ENCODE measurements at regions of chr16 and their contacts with region 1.

Region 1: GRCh38 chr16:8936421-8936820 is 27.3 kb downstream of the USP7 start:
- DNase-seq: peak; percentile 83
- ATAC-seq: peak; percentile 99
- H3K4me3 Mint-ChIP-seq: no peak overlapping the region
- H3K27ac Mint-ChIP-seq: no peak overlapping the region
- H3K4me1 Mint-ChIP-seq: peaks cover 58% of the 10 kb centered on the region
- H3K27me3 Mint-ChIP-seq: no peaks in the 10 kb centered on the region

Region 2: GRCh38 chr16:8878521-8878911 is 57.9 kb before region 1 on chr16:
- CTCF ChIA-PET with region 1: interaction called, 16 read pairs
- POLR2A ChIA-PET with region 1: no interaction called
- DNase-seq: no peak
- ATAC-seq: no peak
- H3K4me3 Mint-ChIP-seq: no peak overlapping the region
- H3K27ac Mint-ChIP-seq: no peak overlapping the region
- H3K4me1 Mint-ChIP-seq: peaks cover 31% of the 10 kb centered on the region
- H3K27me3 Mint-ChIP-seq: no peaks in the 10 kb centered on the region

Region 3: DNA sequence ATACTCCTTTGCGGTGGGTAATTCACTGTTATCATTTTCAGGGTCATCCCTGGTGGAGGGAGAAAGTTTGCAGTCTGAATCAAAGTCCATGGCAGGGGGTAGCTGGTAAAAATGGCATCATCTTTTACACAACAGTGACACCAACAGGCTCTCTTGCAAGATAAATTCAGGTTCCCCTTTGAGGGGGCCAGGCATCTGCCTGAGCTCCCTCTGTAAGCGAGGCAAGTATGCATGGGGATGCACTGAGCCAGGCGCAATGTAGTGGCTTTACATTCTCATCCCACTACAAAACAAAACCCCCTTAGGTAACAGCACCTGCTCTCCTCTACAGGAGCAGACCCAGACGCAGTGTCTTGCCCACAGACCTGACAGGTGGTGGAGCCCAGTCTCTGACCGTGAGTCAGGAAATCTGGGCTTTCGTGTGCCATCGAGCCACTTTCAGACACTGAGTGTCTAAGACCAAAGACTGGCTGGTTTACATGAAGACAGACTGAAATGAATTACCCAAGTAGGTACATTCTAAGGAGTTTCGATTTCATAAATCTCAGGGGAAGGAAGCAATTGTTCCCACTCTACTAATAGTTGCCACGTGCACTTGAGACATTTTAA is 36.6 kb before region 1 on chr16:
- CTCF ChIA-PET with region 1: interaction called, 17 read pairs
- POLR2A ChIA-PET with region 1: no interaction called
- DNase-seq: no peak
- ATAC-seq: no peak
- H3K4me3 Mint-ChIP-seq: no peak overlapping the region
- H3K27ac Mint-ChIP-seq: no peak overlapping the region
- H3K4me1 Mint-ChIP-seq: no peaks in the 10 kb centered on the region
- H3K27me3 Mint-ChIP-seq: no peaks in the 10 kb centered on the region

Region 4: DNA sequence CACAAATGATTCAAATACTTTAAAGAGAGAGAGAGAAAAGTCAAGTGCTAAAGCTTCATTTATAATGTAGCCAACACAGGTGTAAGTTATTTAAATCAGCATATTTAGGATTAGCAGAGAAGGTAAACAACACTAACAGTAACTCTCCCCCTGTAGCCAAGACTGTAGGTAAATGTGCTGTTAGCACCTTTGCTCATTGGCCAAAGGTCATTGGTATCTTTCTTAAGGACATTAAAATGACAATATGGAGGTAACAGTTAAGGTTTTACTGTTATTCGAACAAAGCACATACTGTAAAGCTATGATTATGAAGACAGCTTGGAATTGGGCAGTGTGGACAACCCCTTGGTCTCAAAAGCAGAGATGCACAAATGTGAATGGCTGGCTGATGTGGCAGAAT is 25.6 kb before region 1 on chr16:
- CTCF ChIA-PET with region 1: interaction called, 30 read pairs
- POLR2A ChIA-PET with region 1: no interaction called
- DNase-seq: no peak
- ATAC-seq: no peak
- H3K4me3 Mint-ChIP-seq: no peak overlapping the region
- H3K27ac Mint-ChIP-seq: peak overlapping the region; percentile 52
- H3K4me1 Mint-ChIP-seq: peaks cover 52% of the 10 kb centered on the region
- H3K27me3 Mint-ChIP-seq: no peaks in the 10 kb centered on the region

Region 5: GRCh38 chr16:8946544-8946943 is 10.1 kb after region 1 on chr16:
- CTCF ChIA-PET with region 1: interaction called, 66 read pairs
- POLR2A ChIA-PET with region 1: interaction called, 5 read pairs
- DNase-seq: no peak
- ATAC-seq: no peak
- H3K4me3 Mint-ChIP-seq: no peak overlapping the region
- H3K27ac Mint-ChIP-seq: no peak overlapping the region
- H3K4me1 Mint-ChIP-seq: peaks cover 83% of the 10 kb centered on the region
- H3K27me3 Mint-ChIP-seq: no peaks in the 10 kb centered on the region

Region 6: DNA sequence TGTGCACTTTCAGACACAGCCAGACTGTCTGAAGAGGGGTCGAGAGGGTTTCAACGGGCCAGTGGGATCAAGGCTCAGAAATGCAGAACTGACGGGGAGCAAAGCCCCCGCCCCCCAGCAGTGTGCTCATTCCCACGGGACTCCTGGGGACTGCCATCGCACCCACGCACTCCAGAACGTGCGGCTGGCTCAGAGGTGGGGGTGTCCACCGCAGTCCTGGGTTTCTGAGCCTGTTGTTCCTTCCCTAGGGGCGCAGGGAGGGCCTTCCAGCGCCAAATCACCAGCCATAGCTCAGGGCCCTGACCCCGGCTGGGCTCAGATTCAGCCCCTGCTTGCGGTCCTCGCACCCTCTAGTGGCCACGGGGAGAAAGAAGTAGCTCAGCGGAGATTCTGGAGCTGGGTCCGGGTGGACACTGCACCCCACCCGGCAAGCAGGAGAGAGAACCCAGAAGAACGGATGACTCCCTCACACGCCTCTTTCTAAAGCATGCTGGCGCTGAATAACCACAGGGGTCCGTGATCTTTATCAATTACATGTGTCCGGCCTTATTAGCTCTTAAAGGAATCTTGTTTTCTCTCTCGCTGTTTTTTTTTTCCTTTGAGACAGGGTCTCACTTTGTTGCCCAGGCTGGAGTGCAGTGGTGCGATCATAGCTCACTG is 72.3 kb after region 1 on chr16:
- CTCF ChIA-PET with region 1: interaction called, 66 read pairs
- POLR2A ChIA-PET with region 1: no interaction called
- DNase-seq: peak; percentile 77
- ATAC-seq: peak; percentile 99
- H3K4me3 Mint-ChIP-seq: no peak overlapping the region
- H3K27ac Mint-ChIP-seq: no peak overlapping the region
- H3K4me1 Mint-ChIP-seq: peaks cover 4% of the 10 kb centered on the region
- H3K27me3 Mint-ChIP-seq: peaks cover 16% of the 10 kb centered on the region